ENCODE measurements at regions of chr7 and their contacts with region 1.

Region 1: DNA sequence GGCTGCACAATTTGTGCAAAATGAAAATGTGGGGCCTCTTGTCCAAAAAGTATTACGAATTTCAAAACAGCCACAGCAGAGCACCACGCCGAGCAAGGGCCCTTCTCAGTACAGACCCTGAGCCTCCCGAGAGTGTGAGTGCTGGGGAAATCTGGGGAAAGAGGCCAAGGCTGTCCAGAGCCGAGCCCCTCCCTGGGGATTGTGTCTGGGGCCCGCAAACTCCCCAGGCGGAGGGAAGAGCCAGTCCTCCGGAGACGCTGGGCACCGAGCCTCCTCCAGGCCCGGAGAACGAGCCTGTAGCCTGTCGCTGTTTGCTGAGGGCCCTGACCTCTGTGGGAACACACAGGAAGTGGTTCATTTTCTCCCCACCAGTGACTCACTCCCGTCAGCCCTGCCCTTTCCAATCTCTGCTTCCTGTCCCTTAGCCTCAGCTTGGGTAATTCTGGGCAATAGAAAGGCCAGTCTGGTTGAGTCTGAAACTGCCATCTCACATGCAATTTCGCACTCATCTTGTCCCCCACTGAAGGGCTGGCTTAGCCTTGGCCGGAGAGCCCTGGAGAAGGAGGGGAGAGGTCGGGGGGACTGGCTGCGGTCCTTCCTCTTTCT is 19.5 kb upstream of the GNA12 start:
- DNase-seq: peak; percentile 40
- H3K4me3 ChIP-seq: no peak overlapping the region
- H3K27ac ChIP-seq: no peak overlapping the region
- H3K4me1 ChIP-seq: peaks cover 9% of the 10 kb centered on the region
- CTCF ChIP-seq: no peak

Region 2: GRCh38 chr7:2660585-2661408 is 202.8 kb before region 1 on chr7:
- CTCF ChIA-PET with region 1: no interaction called
- POLR2A ChIA-PET with region 1: no interaction called
- intact Hi-C with region 1: no loop called
- DNase-seq: no peak
- H3K4me3 ChIP-seq: no peak overlapping the region
- H3K27ac ChIP-seq: no peak overlapping the region
- H3K4me1 ChIP-seq: no peaks in the 10 kb centered on the region
- CTCF ChIP-seq: peak; percentile 71

Region 3: DNA sequence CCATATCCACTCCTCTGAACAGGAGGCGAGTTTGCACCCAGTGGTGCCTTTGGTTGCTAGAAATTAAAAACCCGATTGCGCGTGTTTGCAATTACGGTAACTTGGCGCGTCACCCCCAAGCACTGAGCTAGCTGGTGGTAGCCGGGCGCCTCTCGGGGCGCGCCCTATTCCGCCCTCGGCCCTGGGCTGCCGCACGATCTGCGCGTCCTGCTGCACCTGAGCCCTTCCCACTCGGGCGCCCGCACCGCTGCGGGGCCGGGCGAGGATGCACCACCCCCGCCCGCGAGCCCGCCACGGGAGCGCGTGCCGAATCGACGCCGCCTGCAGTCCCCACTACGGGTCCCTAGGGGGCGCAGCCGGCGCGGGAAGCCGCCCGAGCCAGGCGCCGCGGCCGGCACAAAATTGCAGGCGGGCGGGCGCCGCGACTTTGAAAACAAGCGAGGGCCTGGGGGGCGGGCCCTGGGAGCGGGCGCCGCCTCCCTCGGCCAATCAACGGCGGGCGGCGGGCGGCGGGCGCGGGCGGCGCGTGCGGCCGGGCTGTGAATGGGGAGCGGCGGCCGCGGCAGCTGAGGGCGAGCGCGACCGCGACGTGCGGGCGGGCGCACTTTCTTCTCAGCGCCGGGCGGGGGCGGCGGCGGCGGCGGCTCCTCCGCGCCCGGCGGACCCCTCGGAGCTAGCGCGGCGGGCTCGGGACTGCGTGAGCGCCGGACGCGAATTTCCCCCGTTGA is 437.3 kb after region 1 on chr7 and contains the start of gene SDK1:
- CTCF ChIA-PET with region 1: no interaction called
- POLR2A ChIA-PET with region 1: no interaction called
- intact Hi-C with region 1: loop called (anchors 10 kb)
- DNase-seq: peak; percentile 92
- H3K4me3 ChIP-seq: peak within 1 kb of the TSS; percentile 47
- H3K27ac ChIP-seq: no peak within 1 kb of the TSS
- H3K4me1 ChIP-seq: peaks cover 5% of the 10 kb centered on the region
- CTCF ChIP-seq: peak; percentile 77
- total RNA-seq, gene SDK1: 0.03 and 0.19 TPM in 2 replicates

Region 4: GRCh38 chr7:3537210-3537875 is 673.8 kb after region 1 on chr7:
- CTCF ChIA-PET with region 1: no interaction called
- POLR2A ChIA-PET with region 1: no interaction called
- intact Hi-C with region 1: no loop called
- DNase-seq: no peak
- H3K4me3 ChIP-seq: no peak overlapping the region
- H3K27ac ChIP-seq: no peak overlapping the region
- H3K4me1 ChIP-seq: no peaks in the 10 kb centered on the region
- CTCF ChIP-seq: no peak

Measured in OCI-LY7 (cell line).